ENCODE measurements at regions of chr3 and their contacts with region 1.

Region 1: DNA sequence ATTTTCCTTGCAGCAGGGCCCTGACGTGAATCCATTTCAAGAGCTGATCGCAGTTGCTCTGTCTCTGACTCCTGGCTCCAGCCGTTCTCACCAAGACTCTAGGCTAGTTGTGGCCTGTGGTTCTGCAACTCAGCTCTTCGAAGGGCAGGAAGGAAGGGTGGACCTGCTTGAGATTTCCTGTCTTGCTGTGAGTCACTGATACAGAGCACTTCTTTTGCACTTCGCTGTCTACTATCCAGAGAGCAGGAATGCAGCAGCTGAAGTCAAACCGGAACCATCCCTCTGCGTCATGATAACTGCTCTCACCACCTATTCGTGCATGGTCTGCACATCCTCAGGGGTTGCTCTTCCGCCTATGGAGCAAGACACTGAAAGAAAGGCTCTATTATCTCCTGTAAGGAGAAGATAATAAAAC is 59.7 kb downstream of the RAP2B start:
- DNase-seq: peak; percentile 70 to 77 (median 73)
- ATAC-seq: peak; percentile 97 to 100 (median 100)
- H3K4me3 ChIP-seq: peak overlapping the region in 5 of 12 donors; percentile 1 to 17 (median 11)
- H3K27ac ChIP-seq: peak overlapping the region; percentile 40 to 95 (median 68)
- H3K4me1 ChIP-seq: peaks cover 0 to 38% (median 8%) of the 10 kb centered on the region in 12 donors
- H3K27me3 ChIP-seq: no peaks in the 10 kb centered on the region
- CTCF ChIP-seq: no peak
- POLR2A ChIP-seq: no peak

Region 2: DNA sequence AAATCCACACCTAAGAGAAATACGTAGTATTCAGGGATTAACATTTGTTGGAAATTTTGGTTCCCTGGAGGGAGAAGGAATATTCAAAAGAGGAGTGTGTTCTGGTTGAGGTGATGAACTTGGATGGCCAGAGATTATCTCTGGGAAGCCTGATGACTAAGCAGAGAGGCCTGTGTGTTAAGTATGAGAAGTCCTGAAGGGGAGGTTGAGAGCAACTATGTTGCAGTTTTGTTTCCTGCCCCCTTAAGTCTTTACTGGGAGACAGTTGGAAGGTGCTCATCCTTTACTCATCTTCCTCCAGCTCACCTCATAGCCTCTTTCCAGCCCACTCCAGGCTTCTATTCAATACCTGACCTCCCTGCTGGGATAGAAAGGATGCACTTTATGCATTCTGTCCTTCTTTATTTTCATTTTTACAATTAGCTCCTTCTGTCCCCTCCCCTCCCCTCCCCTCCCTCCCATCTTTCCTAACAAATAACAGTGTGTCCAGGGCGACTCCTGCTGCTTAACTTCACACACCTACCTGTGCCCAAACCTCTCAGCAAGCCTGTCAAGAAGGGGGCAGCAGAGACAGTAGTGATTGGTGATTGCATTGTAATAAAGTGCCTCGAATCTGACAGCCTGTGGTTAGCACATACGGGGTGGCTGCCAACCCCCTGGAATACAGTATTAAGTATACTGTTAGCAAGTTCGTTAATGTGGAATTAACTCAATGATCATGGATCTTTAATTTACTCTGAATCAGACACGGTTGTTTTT is 47.8 kb before region 1 on chr3:
- intact Hi-C with region 1: loop called in 2 of 10 experiments (anchors 10 kb)
- DNase-seq: no peak
- ATAC-seq: no peak
- H3K4me3 ChIP-seq: no peak overlapping the region
- H3K27ac ChIP-seq: no peak overlapping the region
- H3K4me1 ChIP-seq: no peaks in the 10 kb centered on the region
- H3K27me3 ChIP-seq: no peaks in the 10 kb centered on the region
- CTCF ChIP-seq: no peak
- POLR2A ChIP-seq: no peak

Region 3: DNA sequence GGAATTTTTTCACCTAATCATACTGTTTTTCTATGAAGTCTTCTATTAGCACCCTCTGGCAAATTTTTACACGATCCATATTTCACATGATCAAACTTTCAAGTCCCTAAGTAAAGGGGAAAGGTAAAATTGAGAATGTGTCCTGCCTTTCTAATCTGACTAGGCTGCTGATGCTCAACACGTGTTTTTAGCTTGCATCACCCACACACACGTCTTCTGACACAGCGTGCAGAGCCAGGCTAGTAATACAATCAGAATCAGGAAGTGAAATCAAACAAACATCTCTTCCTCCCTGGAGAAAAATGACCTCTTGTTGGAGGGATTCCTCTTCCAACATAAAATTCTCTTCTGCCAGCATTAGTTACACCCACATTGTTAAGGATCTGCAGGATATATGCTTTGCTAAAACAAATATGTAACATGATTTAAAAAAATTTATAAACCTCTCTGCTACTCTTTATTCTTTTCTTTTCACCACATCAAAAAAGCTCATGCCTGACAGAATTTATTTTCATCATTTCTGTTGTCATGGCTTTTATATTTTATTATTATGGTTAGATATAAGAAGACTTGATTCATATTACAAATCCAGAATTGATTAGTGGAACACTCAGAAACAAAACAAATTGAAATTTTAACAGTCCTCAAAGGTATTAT is 62.7 kb after region 1 on chr3:
- intact Hi-C with region 1: loop called in 1 of 10 experiments (anchors 10 kb)
- DNase-seq: peak in 4 of 5 donors; percentile 42 to 72 (median 50)
- ATAC-seq: peak; percentile 75 to 94 (median 90)
- H3K4me3 ChIP-seq: no peak overlapping the region
- H3K27ac ChIP-seq: peak overlapping the region in 8 of 12 donors; percentile 1 to 84 (median 29)
- H3K4me1 ChIP-seq: peaks cover 0 to 45% (median 15%) of the 10 kb centered on the region in 12 donors
- H3K27me3 ChIP-seq: no peaks in the 10 kb centered on the region
- CTCF ChIP-seq: no peak
- POLR2A ChIP-seq: no peak

Measured in heart left ventricle (tissue), 16 donors.